Posterior vena cava (tissue), 2 donors: ENCODE measurements at regions of chr1 and their contacts with region 1.

Region 1: DNA sequence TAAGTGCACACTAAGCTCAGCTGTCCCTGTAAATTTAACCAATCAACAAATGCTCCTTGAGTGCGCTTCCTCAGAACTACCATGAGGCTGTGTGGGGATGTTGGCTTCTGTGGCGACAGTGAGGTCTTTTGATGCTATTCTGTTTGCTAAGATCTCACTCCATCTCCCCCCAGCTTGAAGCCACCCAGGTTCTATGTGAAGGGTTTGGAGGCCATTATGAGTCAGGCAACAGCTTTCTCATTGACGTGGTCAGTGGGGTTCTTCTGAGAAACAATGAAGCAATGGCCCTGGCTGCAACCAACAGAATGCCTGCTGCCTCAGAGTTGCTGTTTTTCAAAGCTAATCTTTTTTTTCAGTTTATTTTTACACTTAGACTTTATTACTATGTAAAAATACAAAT is 205.5 kb downstream of the PTBP2 start:
- DNase-seq: no peak

Region 2: GRCh38 chr1:96865731-96866685 is 61.1 kb before region 1 on chr1:
- intact Hi-C with region 1: no loop called
- DNase-seq: no peak

Region 3: DNA sequence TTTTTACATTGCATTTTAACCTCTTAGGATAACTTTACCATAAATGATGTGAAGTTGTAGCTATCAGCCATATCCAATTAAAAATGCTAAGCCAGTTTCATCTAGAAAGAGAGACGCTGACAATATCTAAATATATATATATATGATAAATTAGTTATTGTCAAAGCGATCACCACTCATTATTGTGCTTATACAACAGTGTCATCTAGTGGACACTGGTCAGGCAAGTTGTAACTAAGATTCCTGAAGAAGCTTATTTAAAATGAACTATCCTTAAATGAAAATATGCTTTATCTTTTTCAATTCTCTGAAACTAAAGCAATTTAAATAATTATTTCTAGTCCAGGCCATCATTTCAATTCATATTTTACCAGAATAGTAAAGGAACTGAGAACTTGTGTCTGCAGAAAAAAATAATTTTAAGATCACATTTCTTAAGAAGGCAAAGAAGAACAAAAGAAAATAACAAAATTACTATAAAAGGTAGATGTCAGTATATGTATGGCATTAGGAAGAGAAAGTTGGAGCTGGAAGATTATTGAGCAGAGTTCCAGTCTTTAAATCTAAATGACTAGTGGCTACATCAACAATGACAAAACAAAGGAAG is 1541.1 kb after region 1 on chr1:
- intact Hi-C with region 1: loop called in 1 of 2 experiments (anchors 5 kb)
- DNase-seq: no peak